HCT116 (cell line): ENCODE measurements at regions of chr10 and their contacts with region 1.

Region 1: GRCh38 chr10:104209575-104210198 is 22.5 kb downstream of the CFAP43 start:
- DNase-seq: peak; percentile 41
- ATAC-seq: peak; percentile 93
- H3K4me3 ChIP-seq: no peak overlapping the region
- H3K27ac ChIP-seq: no peak overlapping the region
- H3K4me1 ChIP-seq: no peaks in the 10 kb centered on the region
- H3K27me3 ChIP-seq: no peaks in the 10 kb centered on the region
- CTCF ChIP-seq: peak; percentile 81 to 92 (median 83)
- POLR2A ChIP-seq: no peak
- RAD21 ChIP-seq: peak; percentile 95

Region 2: GRCh38 chr10:104045151-104046089 is 164.3 kb before region 1 on chr10:
- CTCF ChIA-PET with region 1: interaction called, 5 read pairs
- POLR2A ChIA-PET with region 1: no interaction called
- RAD21 ChIA-PET with region 1: no interaction called
- intact Hi-C with region 1: loop called (anchors 1 kb)
- DNase-seq: peak; percentile 74
- ATAC-seq: peak; percentile 93
- H3K4me3 ChIP-seq: no peak overlapping the region
- H3K27ac ChIP-seq: no peak overlapping the region
- H3K4me1 ChIP-seq: peaks cover 15 to 38% of the 10 kb centered on the region in 2 experiments
- H3K27me3 ChIP-seq: no peaks in the 10 kb centered on the region
- CTCF ChIP-seq: peak in 2 of 3 experiments; percentile 90 to 94; a peak in 4 of 6 replicates
- POLR2A ChIP-seq: no peak
- RAD21 ChIP-seq: no peak

Region 3: DNA sequence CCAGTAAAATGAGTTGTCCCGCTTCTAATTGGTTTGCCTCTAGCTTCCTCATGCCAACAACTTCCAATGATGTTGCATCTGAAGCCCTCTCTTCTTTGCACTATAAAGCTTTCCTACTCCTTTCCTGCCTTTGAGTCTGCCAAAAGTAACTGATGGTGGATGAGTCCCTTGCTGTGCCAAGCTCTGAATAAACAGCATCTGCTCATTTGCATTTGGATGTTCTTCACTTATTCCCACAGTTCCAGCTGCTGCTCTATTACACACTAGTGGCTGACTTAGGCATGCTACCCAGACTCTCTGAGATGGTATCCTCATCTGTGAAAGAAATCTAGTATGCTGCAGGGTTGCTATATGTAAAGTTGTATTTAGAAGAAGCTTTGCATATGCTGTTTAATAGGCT is 62.8 kb before region 1 on chr10:
- CTCF ChIA-PET with region 1: no interaction called
- POLR2A ChIA-PET with region 1: no interaction called
- RAD21 ChIA-PET with region 1: no interaction called
- intact Hi-C with region 1: no loop called
- DNase-seq: no peak
- ATAC-seq: no peak
- H3K4me3 ChIP-seq: no peak overlapping the region
- H3K27ac ChIP-seq: no peak overlapping the region
- H3K4me1 ChIP-seq: no peaks in the 10 kb centered on the region
- H3K27me3 ChIP-seq: no peaks in the 10 kb centered on the region
- CTCF ChIP-seq: no peak
- POLR2A ChIP-seq: no peak
- RAD21 ChIP-seq: no peak